Gastrocnemius medialis (tissue), 4 donors: ENCODE measurements at regions of chr2 and their contacts with region 1.

Region 1: DNA sequence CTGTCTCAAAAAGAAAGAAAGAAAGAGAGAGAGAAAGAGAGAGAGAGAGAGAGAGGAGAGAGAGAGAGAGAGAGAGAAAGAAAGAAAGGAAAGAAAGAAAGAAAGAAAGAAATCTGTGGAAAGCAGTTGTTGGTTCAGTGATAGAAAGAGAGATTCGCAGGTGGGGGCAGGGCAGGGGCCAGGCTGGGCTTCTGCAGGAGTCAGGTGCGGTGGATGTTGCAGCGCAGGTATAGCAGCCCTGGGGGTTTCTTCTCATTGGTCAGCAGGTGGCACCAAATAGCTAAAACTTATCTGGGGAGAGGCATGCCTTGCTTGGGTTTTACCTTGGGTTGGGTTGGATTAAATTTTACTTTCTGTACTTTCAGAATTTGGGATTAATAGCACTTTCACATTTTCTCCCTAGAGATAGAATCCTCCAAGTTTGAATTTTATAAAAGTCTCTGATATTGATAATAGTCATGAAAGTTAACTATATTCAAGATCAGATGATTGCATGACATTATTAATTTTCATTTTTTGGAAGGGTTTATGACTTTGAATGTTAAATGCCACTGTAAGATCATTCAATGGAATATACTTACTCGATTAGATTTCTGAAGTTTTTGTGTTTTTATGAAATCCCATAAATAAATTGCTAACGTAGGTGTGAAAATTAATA is 66.6 kb downstream of the SPTBN1 start:
- DNase-seq: peak in 1 of 2 donors; percentile 26
- ATAC-seq: peak; percentile 63 to 67
- H3K4me3 ChIP-seq: no peak overlapping the region
- H3K27ac ChIP-seq: peak overlapping the region in 2 of 4 donors; percentile 67 to 73
- H3K4me1 ChIP-seq: peaks cover 20 to 63% of the 10 kb centered on the region in 2 donors
- H3K27me3 ChIP-seq: no peaks in the 10 kb centered on the region
- CTCF ChIP-seq: peak; percentile 48 to 63 (median 55)
- POLR2A ChIP-seq: no peak

Region 2: GRCh38 chr2:54206596-54206995 is 316.2 kb before region 1 on chr2:
- in situ Hi-C with region 1: loop called in 1 of 4 experiments (anchors 25 kb)
- intact Hi-C with region 1: no loop called
- DNase-seq: no peak
- ATAC-seq: no peak
- H3K4me3 ChIP-seq: no peak overlapping the region
- H3K27ac ChIP-seq: no peak overlapping the region
- H3K4me1 ChIP-seq: peaks cover 17 to 33% of the 10 kb centered on the region in 2 donors
- H3K27me3 ChIP-seq: no peaks in the 10 kb centered on the region
- CTCF ChIP-seq: peak; percentile 21 to 49 (median 44)
- POLR2A ChIP-seq: no peak

Region 3: GRCh38 chr2:54599914-54600313 is 77.2 kb after region 1 on chr2:
- in situ Hi-C with region 1: no loop called
- intact Hi-C with region 1: loop called (anchors 10 kb)
- DNase-seq: peak; percentile 46 to 54
- ATAC-seq: peak; percentile 44 to 49
- H3K4me3 ChIP-seq: no peak overlapping the region
- H3K27ac ChIP-seq: peak overlapping the region; percentile 45 to 71 (median 69)
- H3K4me1 ChIP-seq: peaks cover 93 to 99% of the 10 kb centered on the region in 2 donors
- H3K27me3 ChIP-seq: no peaks in the 10 kb centered on the region
- CTCF ChIP-seq: no peak
- POLR2A ChIP-seq: no peak

Region 4: DNA sequence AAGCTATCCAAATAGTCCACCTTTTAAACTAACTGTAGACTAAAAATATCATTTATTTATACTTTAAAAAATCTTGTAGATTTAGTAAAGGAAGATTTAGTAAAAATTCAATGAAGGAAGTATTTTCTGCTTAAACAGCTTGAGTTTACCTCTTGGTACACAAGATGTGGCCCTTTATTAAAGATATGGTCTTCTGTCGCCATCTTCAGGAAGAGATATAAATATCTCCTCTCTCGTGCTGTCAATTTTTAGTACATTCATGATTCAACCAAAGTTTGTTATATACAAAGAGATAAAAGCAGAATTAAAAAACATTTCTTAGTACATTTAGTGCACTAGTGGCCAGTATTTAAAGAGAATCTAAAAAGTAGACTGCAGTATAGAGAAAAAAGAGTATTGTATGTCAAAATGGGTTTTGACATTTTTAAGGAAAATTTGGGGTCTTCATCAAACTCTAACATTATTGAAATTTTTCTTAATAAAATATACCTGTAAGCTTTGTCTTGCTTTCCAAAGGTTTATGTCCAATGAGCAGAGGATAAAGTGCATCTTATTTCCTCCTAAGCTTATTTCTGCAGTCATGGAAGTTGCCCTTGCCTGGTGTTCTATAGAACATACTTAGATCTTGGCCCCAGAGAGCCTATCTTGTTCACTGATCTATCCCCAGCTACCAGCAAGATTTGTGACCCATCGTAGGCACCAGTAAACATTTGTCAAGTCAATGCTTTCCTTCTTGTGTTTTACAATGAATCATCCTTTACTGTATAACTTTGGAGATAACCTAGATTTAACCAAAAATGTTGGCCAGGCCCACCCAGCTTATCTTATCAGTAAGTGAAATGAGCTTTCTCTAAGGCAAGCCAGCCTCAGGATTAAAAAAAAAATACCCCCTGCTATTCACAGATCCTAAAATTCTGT is 182.2 kb after region 1 on chr2:
- in situ Hi-C with region 1: loop called (anchors 5 to 10 kb)
- intact Hi-C with region 1: loop called (anchors 2 kb)
- DNase-seq: no peak
- ATAC-seq: peak; percentile 80 to 87
- H3K4me3 ChIP-seq: no peak overlapping the region
- H3K27ac ChIP-seq: peak overlapping the region in 1 of 4 donors; percentile 12
- H3K4me1 ChIP-seq: no peaks in the 10 kb centered on the region
- H3K27me3 ChIP-seq: peaks cover 0 to 3% (median 0%) of the 10 kb centered on the region in 3 donors
- CTCF ChIP-seq: peak; percentile 43 to 69 (median 58)
- POLR2A ChIP-seq: no peak

Region 5: DNA sequence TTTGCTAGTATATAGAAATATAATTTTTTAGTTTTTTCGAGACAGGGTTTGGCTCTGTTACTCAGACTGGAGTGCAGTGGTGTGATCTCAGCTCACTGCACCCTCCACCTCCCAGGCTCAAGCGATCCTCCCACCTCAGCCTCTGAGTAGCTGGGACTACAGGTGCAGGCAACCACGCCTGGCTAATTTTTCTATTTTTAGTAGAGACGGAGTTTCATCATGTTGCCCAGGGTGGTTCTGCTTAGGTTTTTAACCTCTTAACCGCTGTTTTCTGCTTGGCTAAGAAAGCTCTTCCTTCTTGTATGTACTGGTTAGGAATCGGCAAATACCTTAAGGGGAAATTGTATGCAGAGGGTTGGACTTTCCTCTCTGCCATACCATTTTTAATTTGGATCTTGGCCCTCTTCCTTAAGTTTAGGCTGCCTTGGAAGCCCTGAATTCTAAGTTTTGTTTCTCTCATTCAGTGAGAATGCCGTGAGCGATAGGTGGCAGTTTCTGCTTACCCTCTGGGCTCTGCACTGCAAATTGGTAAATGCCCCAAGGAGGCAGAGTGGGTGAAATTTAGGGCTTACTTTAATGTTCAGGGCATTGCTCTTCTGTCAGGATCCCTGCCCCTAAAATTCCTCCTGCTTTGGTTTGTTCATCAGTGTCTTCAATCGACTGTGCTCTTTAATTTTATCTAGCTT is 233.0 kb after region 1 on chr2:
- in situ Hi-C with region 1: no loop called
- intact Hi-C with region 1: no loop called
- DNase-seq: no peak
- ATAC-seq: no peak
- H3K4me3 ChIP-seq: no peak overlapping the region
- H3K27ac ChIP-seq: no peak overlapping the region
- H3K4me1 ChIP-seq: no peaks in the 10 kb centered on the region
- H3K27me3 ChIP-seq: no peaks in the 10 kb centered on the region
- CTCF ChIP-seq: no peak
- POLR2A ChIP-seq: no peak